ENCODE measurements at regions of chr10 and their contacts with region 1.

Region 1: DNA sequence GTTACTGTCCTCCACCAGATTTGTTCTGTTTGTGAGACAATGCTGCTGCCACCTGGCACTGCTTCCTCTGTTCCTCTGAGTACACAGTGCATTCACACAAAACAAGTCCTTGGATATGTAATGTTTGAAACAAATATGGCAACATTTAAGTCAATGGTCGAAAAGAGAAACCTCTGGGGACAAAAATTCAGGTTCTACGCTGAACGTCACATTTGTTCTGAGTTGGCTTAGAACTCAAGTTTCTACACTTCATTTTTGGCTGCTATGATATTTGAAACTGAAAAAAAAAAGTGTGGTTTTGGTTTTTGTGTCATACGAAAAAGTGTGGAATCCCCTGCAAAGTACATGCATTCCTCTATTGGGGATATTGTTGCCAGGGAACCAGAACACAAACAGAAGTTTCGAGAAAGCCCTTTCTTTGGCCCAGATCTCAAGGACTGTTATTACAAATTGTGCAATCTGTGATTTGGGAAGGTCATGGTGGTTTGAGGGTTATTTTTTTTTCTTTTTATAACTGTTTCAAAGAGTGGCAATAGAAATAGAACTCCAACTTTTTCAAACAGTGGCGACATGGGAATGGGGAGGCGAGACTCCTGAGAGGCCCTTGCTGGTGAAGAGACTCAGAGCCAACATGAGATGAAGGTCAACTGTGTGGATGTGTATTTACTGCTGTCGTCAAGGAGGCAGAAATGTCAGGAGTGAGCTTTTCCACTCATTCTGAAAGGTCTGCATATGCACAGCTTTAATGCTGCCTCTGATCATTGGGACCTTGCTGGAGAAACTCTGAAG is 127.5 kb downstream of the CUBN start:
- DNase-seq: peak; percentile 88
- ATAC-seq: no peak; the same call in 1 of the 2 replicates
- H3K4me3 ChIP-seq: no peak overlapping the region
- H3K27ac ChIP-seq: peak overlapping the region; percentile 30; the same call in 1 of the 2 replicates
- H3K4me1 ChIP-seq: peaks cover 17% of the 10 kb centered on the region
- H3K27me3 ChIP-seq: no peaks in the 10 kb centered on the region
- CTCF ChIP-seq: no peak
- POLR2A ChIP-seq: no peak
- RAD21 ChIP-seq: no peak

Region 2: GRCh38 chr10:16853201-16853600 is 149.0 kb before region 1 on chr10:
- CTCF ChIA-PET with region 1: no interaction called
- POLR2A ChIA-PET with region 1: no interaction called
- dilution Hi-C with region 1: no loop called
- in situ Hi-C with region 1: no loop called
- intact Hi-C with region 1: loop called (anchors 5 kb)
- DNase-seq: peak; percentile 68
- ATAC-seq: peak; percentile 80
- H3K4me3 ChIP-seq: no peak overlapping the region
- H3K27ac ChIP-seq: no peak overlapping the region
- H3K4me1 ChIP-seq: peaks cover 3% of the 10 kb centered on the region
- H3K27me3 ChIP-seq: no peaks in the 10 kb centered on the region
- CTCF ChIP-seq: peak; percentile 76
- POLR2A ChIP-seq: no peak
- RAD21 ChIP-seq: peak; percentile 82

Region 3: DNA sequence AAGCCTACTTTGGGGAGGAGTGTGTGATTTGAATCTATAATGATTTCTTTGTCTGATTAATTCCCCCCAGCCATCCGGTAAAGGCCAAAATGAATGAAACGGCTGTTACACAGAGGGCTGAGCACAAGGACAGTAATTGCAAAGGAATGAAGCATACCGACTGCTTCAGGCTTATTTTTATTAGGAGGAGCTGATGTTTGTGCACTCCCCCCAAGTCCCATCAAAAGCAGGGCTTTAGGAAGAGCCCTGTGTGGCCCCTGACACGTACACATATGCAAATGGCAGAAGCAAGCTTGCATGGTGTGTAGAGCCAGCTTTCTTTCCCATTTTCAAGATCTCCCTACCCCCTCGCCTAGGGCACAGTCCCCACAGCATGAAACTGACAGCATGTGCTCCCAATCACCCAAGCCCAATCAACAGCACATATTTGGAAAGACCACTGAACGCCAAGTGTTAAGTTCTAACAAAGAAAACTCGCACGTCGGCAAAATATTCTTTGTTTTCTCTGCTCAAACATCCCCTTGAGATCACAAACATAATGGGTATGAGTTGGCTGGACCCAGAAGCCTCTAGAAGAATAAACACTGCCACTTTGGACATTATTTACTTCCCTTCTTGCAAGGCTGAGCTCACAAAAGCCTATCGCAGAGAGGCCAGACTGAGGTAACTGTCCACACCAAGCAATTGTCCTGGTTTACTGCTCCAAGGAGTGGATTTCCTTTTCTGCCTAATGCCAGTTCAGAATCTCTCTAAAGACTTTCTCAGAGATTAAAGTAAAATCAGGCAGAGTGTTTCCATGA is 15.5 kb before region 1 on chr10:
- CTCF ChIA-PET with region 1: interaction called, 3 read pairs
- POLR2A ChIA-PET with region 1: interaction called, 10 read pairs
- dilution Hi-C with region 1: no loop called
- in situ Hi-C with region 1: no loop called
- intact Hi-C with region 1: no loop called
- DNase-seq: peak; percentile 88
- ATAC-seq: peak; percentile 92
- H3K4me3 ChIP-seq: no peak overlapping the region
- H3K27ac ChIP-seq: peak overlapping the region; percentile 95
- H3K4me1 ChIP-seq: peaks cover 25% of the 10 kb centered on the region
- H3K27me3 ChIP-seq: no peaks in the 10 kb centered on the region
- CTCF ChIP-seq: no peak
- POLR2A ChIP-seq: no peak
- RAD21 ChIP-seq: peak; percentile 22; the same call in 1 of the 2 replicates

Region 4: DNA sequence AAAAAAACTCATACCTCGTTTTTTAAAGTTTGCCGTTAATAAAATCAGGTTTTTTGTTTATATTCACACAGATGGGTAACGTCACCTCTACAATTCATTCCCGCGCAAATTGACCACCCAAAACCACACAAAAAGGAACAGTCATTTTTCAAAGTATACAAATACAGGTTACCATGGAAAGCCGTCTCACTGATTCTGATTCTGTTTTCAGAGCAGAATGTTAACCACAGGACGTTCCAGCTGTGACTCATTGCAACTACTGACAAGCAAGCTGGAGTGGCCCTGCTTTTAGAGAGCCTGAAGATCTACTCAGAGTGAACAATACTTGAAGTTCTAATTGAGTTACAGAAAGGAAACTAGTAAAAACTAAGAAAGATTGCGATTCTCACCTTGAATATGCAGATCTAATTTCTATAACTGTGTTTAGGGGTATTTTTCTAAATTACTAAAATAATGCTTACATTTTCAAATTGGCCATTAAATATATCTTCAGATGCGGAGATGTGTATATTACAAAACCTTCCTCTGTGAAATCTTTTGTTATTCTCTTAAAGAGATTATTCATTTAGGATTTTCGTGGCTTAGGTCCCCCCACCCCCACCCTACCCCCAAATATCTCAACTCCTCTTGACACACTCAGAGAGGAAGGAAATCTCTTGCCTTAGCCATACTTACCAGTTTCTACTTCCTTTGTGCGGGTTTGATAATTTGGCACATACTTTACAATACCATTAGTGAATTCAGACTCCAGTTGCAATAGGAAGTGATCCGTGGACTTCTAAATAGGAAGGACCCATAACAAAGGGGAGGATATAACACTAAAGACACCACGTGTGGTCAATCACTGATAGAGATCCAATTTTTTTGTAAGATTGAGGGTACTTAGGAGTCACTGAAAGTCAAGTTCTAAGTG is 21.5 kb after region 1 on chr10:
- CTCF ChIA-PET with region 1: interaction called, 3 read pairs
- POLR2A ChIA-PET with region 1: no interaction called
- dilution Hi-C with region 1: no loop called
- in situ Hi-C with region 1: no loop called
- intact Hi-C with region 1: loop called (anchors 2 kb)
- DNase-seq: peak; percentile 99
- ATAC-seq: peak; percentile 81
- H3K4me3 ChIP-seq: no peak overlapping the region
- H3K27ac ChIP-seq: peak overlapping the region; percentile 71
- H3K4me1 ChIP-seq: peaks cover 12% of the 10 kb centered on the region
- H3K27me3 ChIP-seq: no peaks in the 10 kb centered on the region
- CTCF ChIP-seq: no peak
- POLR2A ChIP-seq: peak; percentile 74
- RAD21 ChIP-seq: peak; percentile 46; the same call in 1 of the 2 replicates

Region 5: DNA sequence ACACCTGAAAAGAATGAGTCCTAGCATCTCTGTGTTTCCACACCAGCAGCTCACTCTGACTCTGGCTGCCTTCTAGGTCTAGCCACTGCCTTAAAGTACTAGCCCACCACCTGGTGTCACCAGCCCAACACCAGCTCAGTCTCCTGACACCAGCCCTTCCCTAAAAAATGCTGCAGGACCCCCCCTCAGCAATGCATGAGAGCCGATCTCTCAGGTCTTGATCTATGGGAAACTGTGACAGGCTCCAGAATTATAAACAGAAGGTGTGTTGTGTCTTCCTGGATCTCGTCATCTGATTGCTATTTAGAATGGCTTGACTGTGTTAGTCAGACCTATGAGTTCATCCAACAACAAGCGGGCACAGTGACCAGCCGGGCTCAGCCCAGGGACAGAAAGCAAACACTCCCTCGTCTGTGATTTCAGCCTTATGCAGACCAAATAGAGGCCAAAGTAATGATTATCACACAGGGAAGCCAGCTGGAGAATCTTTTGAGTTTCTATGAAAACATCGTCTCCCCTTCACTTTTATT is 60.9 kb after region 1 on chr10:
- CTCF ChIA-PET with region 1: interaction called, 3 read pairs
- POLR2A ChIA-PET with region 1: no interaction called
- dilution Hi-C with region 1: no loop called
- in situ Hi-C with region 1: no loop called
- intact Hi-C with region 1: loop called (anchors 2 kb)
- DNase-seq: peak; percentile 86
- ATAC-seq: peak; percentile 55
- H3K4me3 ChIP-seq: no peak overlapping the region
- H3K27ac ChIP-seq: peak overlapping the region; percentile 68
- H3K4me1 ChIP-seq: peaks cover 19% of the 10 kb centered on the region
- H3K27me3 ChIP-seq: no peaks in the 10 kb centered on the region
- CTCF ChIP-seq: no peak
- POLR2A ChIP-seq: 0 out of 2 replicates have a peak, but pooled peaks have one; percentile 45
- RAD21 ChIP-seq: peak; percentile 39

Region 6: DNA sequence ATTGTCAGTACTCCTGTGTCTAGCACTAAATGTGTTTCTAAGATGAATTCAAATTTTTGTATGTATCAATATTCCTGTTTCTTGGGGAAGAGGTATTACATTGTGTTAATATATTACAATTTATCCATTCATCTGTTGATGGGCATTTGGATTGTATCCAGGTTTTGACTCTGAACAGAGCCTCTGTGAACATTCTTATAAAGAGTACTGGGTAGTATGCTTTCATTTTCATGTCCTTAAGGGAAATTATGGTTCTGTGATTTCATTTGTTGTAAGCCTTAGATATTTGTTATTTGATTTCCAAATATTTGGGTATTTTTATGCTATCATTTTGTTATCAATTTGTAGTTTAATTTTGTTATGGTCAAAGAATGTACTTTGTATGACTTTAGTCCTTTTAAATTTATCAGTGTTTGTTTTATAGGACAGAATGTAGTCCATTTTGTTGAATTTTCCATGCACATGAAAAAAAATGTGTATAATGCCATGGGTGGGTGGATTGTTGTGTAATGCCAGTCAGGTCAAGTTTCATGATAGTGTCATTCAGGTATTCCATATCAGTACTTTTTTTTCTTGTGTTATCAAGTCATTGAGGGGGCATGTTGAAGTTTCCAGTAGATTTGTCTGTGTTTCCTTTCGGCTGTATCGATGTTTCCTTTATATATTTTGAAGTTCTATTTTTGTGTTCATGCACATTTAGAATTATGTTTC is 680.2 kb after region 1 on chr10:
- CTCF ChIA-PET with region 1: no interaction called
- POLR2A ChIA-PET with region 1: no interaction called
- dilution Hi-C with region 1: no loop called
- in situ Hi-C with region 1: no loop called
- intact Hi-C with region 1: no loop called
- DNase-seq: no peak
- ATAC-seq: no peak
- H3K4me3 ChIP-seq: no peak overlapping the region
- H3K27ac ChIP-seq: no peak overlapping the region
- H3K4me1 ChIP-seq: no peaks in the 10 kb centered on the region; the same call in 1 of the 2 replicates
- H3K27me3 ChIP-seq: no peaks in the 10 kb centered on the region
- CTCF ChIP-seq: no peak
- POLR2A ChIP-seq: no peak
- RAD21 ChIP-seq: no peak

Region 7: DNA sequence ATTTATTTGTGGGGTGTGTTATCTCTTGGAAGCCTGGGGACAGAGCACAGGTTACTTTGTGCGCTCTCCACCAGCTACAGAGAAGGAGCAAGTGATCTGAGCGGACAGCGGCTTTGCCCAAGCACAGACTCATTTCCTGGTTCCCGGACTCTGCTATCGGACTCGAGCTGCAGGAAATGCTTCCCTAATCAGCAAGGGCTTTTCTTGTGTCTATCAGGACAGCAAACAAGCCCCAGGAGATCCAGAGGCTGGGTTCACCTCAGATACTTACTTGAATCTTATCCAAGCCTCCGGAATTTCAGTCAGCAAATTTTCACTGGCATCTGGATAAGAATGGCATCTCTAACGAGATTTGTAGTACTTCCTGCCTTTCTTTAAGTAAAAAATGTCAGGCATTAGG is 834.8 kb after region 1 on chr10:
- CTCF ChIA-PET with region 1: no interaction called
- POLR2A ChIA-PET with region 1: no interaction called
- dilution Hi-C with region 1: no loop called
- in situ Hi-C with region 1: no loop called
- intact Hi-C with region 1: no loop called
- DNase-seq: peak; percentile 62
- ATAC-seq: peak; percentile 78
- H3K4me3 ChIP-seq: peak overlapping the region; percentile 48; the same call in 1 of the 2 replicates
- H3K27ac ChIP-seq: no peak overlapping the region
- H3K4me1 ChIP-seq: peaks cover 6% of the 10 kb centered on the region
- H3K27me3 ChIP-seq: no peaks in the 10 kb centered on the region
- CTCF ChIP-seq: no peak
- POLR2A ChIP-seq: no peak
- RAD21 ChIP-seq: no peak